ENCODE measurements at regions of chr5 and their contacts with region 1.

Region 1: GRCh38 chr5:134041570-134042411 is 37.0 kb upstream of the VDAC1 start:
- DNase-seq: no peak
- H3K4me3 ChIP-seq: no peak overlapping the region
- H3K27ac ChIP-seq: no peak overlapping the region
- H3K4me1 ChIP-seq: no peaks in the 10 kb centered on the region
- H3K27me3 ChIP-seq: peaks cover 0 to 2% (median 0%) of the 10 kb centered on the region in 5 experiments

Region 2: DNA sequence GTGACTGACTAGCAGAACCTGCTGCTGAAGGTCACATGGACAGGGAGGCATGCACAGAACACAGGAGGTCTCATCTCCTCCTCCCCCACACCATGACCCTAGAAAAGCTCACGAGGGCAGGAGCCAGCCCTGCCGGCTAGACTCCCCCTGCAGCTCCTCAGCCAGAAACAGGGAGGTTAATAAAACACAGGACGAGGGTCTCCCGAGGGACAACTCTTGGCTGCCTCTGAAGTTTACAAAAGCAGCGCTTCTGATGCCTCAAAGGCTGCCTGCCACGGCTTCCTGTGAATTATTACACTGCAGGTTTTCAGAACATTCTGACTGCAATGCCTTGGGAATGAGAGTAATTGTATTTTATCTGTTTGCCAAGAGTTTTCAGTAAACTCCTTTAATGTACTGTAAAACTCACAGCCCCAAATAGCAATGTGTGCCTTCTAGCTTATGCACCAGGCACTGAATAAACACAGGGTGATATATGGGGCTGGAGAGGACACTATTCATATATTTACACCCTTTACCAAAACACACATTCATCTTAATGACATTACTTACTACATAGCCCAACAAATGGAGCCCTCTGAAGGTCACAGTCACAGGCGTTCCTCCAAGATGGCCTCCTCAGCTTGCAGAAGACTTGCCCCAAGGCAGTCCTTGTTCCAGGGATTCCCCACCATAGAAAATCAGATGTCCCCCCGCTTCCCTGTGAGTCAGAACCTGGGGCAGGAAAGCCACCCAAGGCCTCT is 157.1 kb before region 1 on chr5:
- CTCF ChIA-PET with region 1: no interaction called
- POLR2A ChIA-PET with region 1: no interaction called
- DNase-seq: no peak
- H3K4me3 ChIP-seq: no peak overlapping the region
- H3K27ac ChIP-seq: no peak overlapping the region
- H3K4me1 ChIP-seq: no peaks in the 10 kb centered on the region
- H3K27me3 ChIP-seq: peaks cover 0 to 4% (median 0%) of the 10 kb centered on the region in 5 experiments

Region 3: GRCh38 chr5:134018154-134018985 is 23.4 kb before region 1 on chr5:
- CTCF ChIA-PET with region 1: interaction called, 20 read pairs
- POLR2A ChIA-PET with region 1: no interaction called
- DNase-seq: peak in 2 of 3 donors; percentile 33 to 62
- H3K4me3 ChIP-seq: no peak overlapping the region
- H3K27ac ChIP-seq: no peak overlapping the region
- H3K4me1 ChIP-seq: peaks cover 0 to 8% (median 2%) of the 10 kb centered on the region in 4 experiments
- H3K27me3 ChIP-seq: peaks cover 0 to 2% (median 0%) of the 10 kb centered on the region in 5 experiments

Region 4: GRCh38 chr5:134053840-134054338 is 12.1 kb after region 1 on chr5:
- CTCF ChIA-PET with region 1: interaction called, 36 read pairs
- POLR2A ChIA-PET with region 1: no interaction called
- DNase-seq: peak in 2 of 3 donors; percentile 23 to 47
- H3K4me3 ChIP-seq: no peak overlapping the region
- H3K27ac ChIP-seq: no peak overlapping the region
- H3K4me1 ChIP-seq: peaks cover 5 to 22% (median 8%) of the 10 kb centered on the region in 4 experiments
- H3K27me3 ChIP-seq: no peaks in the 10 kb centered on the region

Region 5: DNA sequence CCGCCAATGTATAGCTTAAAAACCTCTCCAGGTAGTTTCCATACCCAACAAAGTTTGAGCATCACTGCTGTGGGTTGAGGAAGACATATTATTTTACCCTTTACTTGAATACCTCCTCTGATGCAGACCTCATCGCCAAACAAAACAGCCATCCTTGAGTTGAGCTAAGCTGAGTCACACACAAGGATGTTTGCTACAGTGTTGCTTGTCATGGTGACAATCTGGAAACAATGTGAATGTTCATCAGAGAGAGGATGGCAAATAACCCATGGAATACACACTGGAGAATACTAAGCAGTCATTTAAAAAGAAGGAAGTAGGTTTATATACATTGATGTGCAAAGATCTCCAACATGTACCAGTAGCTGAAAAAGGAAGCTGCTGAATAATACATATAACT is 31.6 kb after region 1 on chr5:
- CTCF ChIA-PET with region 1: interaction called, 10 read pairs
- POLR2A ChIA-PET with region 1: no interaction called
- DNase-seq: peak in 2 of 3 donors; percentile 32 to 44
- H3K4me3 ChIP-seq: no peak overlapping the region
- H3K27ac ChIP-seq: no peak overlapping the region
- H3K4me1 ChIP-seq: peaks cover 0 to 12% (median 10%) of the 10 kb centered on the region in 4 experiments
- H3K27me3 ChIP-seq: peaks cover 0 to 7% (median 0%) of the 10 kb centered on the region in 5 experiments

Region 6: DNA sequence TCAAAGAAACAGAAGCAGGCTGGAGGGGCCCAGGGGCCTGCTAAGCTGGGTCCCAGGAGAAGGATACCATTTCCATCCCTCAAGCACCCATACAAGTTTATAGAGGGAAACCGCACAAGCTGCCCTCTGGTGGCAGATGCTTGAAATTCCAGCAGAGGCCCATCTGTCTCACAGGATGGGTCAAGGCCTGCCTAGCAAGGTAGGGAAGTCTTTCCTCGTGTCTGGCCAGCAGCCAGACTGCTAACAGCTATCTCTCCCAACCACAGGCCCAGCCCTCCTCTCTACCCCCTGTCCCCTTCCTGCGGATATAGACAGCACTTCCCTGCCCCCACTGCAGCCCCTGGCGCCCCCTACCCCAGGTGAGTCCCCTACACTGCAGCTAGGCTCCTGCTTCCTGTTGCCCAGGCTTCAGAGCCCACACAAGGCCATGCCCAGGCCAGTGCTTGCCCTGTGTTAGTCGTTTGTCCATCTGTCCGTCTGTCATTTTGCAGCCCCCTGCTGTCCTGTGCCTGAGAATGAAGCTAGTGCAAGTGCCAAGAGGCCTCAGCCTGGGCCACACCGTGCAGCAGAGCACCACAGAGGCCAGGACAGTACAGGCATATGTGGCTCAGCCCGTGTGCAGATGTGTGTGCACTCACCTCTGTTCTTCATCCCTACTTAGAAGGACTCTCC is 98.9 kb after region 1 on chr5:
- CTCF ChIA-PET with region 1: interaction called, 167 read pairs
- POLR2A ChIA-PET with region 1: interaction called, 8 read pairs
- DNase-seq: peak; percentile 59 to 79 (median 78)
- H3K4me3 ChIP-seq: peak overlapping the region in 1 of 7 experiments; percentile 28
- H3K27ac ChIP-seq: no peak overlapping the region
- H3K4me1 ChIP-seq: peaks cover 2 to 45% (median 39%) of the 10 kb centered on the region in 4 experiments
- H3K27me3 ChIP-seq: no peaks in the 10 kb centered on the region

Region 7: DNA sequence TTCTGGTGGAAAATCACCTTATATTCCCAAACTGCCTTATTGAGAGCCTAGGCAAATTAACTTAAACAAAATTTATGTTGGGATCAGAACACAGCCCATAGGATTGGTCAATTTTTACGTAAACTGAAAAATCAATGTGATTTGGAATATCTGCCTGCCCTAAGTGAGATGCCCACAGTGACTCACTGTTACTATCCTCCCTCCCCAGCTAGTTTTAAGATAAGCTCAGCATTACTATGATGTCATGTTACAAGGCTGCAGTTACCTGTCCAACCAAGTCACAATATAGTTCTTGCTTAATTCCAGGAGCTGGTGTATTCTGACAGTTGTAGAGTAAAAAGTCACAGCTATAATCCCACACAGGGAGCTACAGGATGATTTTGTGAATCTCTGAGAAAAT is 111.9 kb after region 1 on chr5:
- CTCF ChIA-PET with region 1: interaction called, 70 read pairs
- POLR2A ChIA-PET with region 1: no interaction called
- DNase-seq: no peak
- H3K4me3 ChIP-seq: no peak overlapping the region
- H3K27ac ChIP-seq: no peak overlapping the region
- H3K4me1 ChIP-seq: no peaks in the 10 kb centered on the region
- H3K27me3 ChIP-seq: no peaks in the 10 kb centered on the region

Measured in common myeloid progenitor, CD34-positive (primary cell).